B cell (primary cell): ENCODE measurements at regions of chr19 and their contacts with region 1.

Region 1: GRCh38 chr19:48842789-48843162 is 6.5 kb upstream of the HSD17B14 start:
- DNase-seq: peak; percentile 79
- ATAC-seq: peak; percentile 71
- H3K4me3 ChIP-seq: no peak overlapping the region
- H3K4me3 Mint-ChIP-seq: no peak overlapping the region
- H3K27ac ChIP-seq: no peak overlapping the region
- H3K27ac Mint-ChIP-seq: no peak overlapping the region
- H3K4me1 ChIP-seq: no peaks in the 10 kb centered on the region
- H3K4me1 Mint-ChIP-seq: peaks cover 3% of the 10 kb centered on the region
- H3K27me3 ChIP-seq: no peaks in the 10 kb centered on the region
- H3K27me3 Mint-ChIP-seq: no peaks in the 10 kb centered on the region
- CTCF ChIP-seq: peak; percentile 82

Region 2: DNA sequence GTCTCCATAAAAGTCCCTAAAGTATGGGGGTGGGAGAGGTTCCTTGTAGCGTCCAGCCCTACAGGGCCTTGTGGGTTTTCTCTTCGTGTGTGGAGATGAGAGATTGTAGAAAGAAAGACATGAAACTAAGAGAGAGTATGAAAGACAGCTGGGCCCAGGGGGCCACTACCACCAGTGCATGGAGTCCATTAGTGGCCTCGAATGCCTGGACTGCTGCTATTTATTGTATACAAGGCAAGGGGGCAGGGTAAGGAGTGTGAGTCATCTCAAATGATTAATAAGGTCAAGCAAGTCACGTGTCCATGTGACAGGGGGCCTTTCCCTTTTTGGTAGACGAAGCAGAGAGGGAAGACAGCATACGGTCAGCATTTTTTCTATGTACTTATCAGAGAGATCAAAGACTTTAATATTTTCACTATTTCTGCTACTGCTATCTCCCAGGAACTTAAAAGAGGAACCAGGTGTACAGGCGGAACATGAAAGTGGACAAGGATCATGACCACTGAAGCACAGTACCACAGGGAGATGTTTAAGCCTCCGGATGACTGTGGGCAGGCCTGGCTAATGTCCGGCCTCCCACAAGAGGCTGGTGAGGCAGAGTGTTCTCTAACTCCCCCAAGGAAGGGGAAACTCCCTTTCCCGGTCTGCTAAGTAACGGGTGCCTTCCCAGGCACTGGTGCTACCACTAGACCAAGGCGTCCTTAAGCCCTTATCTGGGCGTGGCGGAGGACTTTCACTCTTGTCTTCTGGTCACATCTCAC is 62.0 kb before region 1 on chr19:
- CTCF ChIA-PET with region 1: interaction called, 43 read pairs
- POLR2A ChIA-PET with region 1: no interaction called
- intact Hi-C with region 1: no loop called
- DNase-seq: no peak
- ATAC-seq: no peak
- H3K4me3 ChIP-seq: no peak overlapping the region
- H3K4me3 Mint-ChIP-seq: no peak overlapping the region
- H3K27ac ChIP-seq: no peak overlapping the region
- H3K27ac Mint-ChIP-seq: peak overlapping the region; percentile 5
- H3K4me1 ChIP-seq: peaks cover 3 to 15% of the 10 kb centered on the region in 2 donors
- H3K4me1 Mint-ChIP-seq: peaks cover 19% of the 10 kb centered on the region
- H3K27me3 ChIP-seq: no peaks in the 10 kb centered on the region
- H3K27me3 Mint-ChIP-seq: no peaks in the 10 kb centered on the region
- CTCF ChIP-seq: no peak

Region 3: DNA sequence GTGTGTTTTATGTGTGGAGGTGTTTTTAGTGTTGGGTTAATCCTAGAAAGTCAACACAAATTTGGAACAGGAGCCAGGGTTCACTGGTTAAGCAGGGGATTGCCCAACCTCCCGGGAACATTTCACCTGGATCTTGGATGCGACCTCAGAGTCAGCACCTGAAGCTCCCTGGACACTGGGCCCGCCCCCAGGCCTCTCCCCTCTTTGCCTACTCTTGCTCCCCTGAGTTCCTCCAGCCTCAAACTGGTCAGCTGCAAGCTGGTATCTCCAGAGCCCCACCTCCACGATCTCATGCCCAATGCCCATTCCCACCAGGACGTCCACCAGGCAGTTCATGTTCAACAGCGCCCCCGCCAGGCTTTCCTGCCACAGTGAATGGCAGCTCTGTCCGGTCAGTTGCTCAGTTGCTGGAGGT is 16.2 kb before region 1 on chr19:
- CTCF ChIA-PET with region 1: interaction called, 26 read pairs
- POLR2A ChIA-PET with region 1: interaction called, 3 read pairs
- intact Hi-C with region 1: no loop called
- DNase-seq: no peak
- ATAC-seq: no peak
- H3K4me3 ChIP-seq: no peak overlapping the region
- H3K4me3 Mint-ChIP-seq: no peak overlapping the region
- H3K27ac ChIP-seq: no peak overlapping the region
- H3K27ac Mint-ChIP-seq: no peak overlapping the region
- H3K4me1 ChIP-seq: no peaks in the 10 kb centered on the region
- H3K4me1 Mint-ChIP-seq: no peaks in the 10 kb centered on the region
- H3K27me3 ChIP-seq: no peaks in the 10 kb centered on the region
- H3K27me3 Mint-ChIP-seq: no peaks in the 10 kb centered on the region
- CTCF ChIP-seq: no peak

Region 4: DNA sequence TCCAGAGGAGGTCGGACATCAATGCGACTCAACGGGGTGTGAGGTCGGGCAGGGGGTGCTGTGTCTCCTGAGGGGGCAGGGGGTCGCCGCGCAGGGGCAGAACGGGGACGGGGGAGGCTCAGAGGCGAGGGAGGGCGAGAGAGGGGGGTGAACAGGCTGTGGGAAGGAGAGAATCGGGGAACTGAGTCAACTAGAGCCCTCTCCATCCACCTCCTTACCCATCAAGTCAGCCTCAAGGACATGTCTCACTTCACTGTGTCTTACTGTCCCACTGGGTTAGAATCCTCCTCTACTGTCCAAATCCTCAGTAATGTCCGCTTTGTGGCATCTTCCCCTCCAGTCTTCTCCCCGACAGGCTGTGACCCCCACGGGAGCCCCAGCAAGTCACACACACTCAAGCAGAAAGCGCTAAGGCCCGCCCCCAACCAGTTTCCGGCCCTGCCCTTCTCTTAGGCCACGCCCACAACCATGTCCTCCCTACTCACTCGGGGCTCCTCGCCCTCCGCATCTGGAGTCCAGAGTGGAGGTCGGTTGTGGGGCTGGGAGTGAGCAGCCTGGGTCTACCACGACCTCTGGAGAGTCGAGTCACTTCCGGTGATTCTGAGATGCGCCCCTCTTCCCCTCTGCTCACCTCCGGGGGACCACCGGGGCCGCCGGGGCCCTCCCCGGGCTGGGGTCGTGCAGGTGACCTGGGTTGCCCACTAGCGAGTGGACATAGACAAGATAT is 16.4 kb after region 1 on chr19:
- CTCF ChIA-PET with region 1: interaction called, 65 read pairs
- POLR2A ChIA-PET with region 1: interaction called, 3 read pairs
- intact Hi-C with region 1: no loop called
- DNase-seq: peak; percentile 77
- ATAC-seq: peak; percentile 80
- H3K4me3 ChIP-seq: peak overlapping the region; percentile 19 to 63 (median 54)
- H3K4me3 Mint-ChIP-seq: peak overlapping the region; percentile 98
- H3K27ac ChIP-seq: peak overlapping the region; percentile 46 to 59
- H3K27ac Mint-ChIP-seq: peak overlapping the region; percentile 90
- H3K4me1 ChIP-seq: peaks cover 5 to 14% of the 10 kb centered on the region in 2 donors
- H3K4me1 Mint-ChIP-seq: peaks cover 10% of the 10 kb centered on the region
- H3K27me3 ChIP-seq: no peaks in the 10 kb centered on the region
- H3K27me3 Mint-ChIP-seq: no peaks in the 10 kb centered on the region
- CTCF ChIP-seq: no peak

Region 5: GRCh38 chr19:48899781-48900476 is 57.2 kb after region 1 on chr19 and contains the start of gene NUCB1:
- CTCF ChIA-PET with region 1: interaction called, 12 read pairs
- POLR2A ChIA-PET with region 1: no interaction called
- intact Hi-C with region 1: no loop called
- DNase-seq: peak; percentile 96
- ATAC-seq: peak; percentile 99
- H3K4me3 ChIP-seq: peak within 1 kb of the TSS; percentile 62 to 95 (median 82)
- H3K4me3 Mint-ChIP-seq: peak within 1 kb of the TSS; percentile 96
- H3K27ac ChIP-seq: peak within 1 kb of the TSS; percentile 61 to 83
- H3K27ac Mint-ChIP-seq: peak within 1 kb of the TSS; percentile 91
- H3K4me1 ChIP-seq: peaks cover 18 to 35% of the 10 kb centered on the region in 2 donors
- H3K4me1 Mint-ChIP-seq: peaks cover 31% of the 10 kb centered on the region
- H3K27me3 ChIP-seq: peaks cover 0 to 25% (median 6%) of the 10 kb centered on the region in 4 experiments
- H3K27me3 Mint-ChIP-seq: peaks cover 11% of the 10 kb centered on the region
- CTCF ChIP-seq: no peak
- total RNA-seq, gene NUCB1: 134 and 136 TPM in 2 replicates

Region 6: GRCh38 chr19:48954595-48955310 is 112.0 kb after region 1 on chr19 and contains the start of gene BAX:
- CTCF ChIA-PET with region 1: interaction called, 10 read pairs
- POLR2A ChIA-PET with region 1: interaction called, 12 read pairs
- intact Hi-C with region 1: no loop called
- DNase-seq: peak; percentile 92
- ATAC-seq: peak; percentile 88
- H3K4me3 ChIP-seq: peak within 1 kb of the TSS; percentile 47 to 99 (median 87)
- H3K4me3 Mint-ChIP-seq: peak within 1 kb of the TSS; percentile 85
- H3K27ac ChIP-seq: peak within 1 kb of the TSS; percentile 84 to 89
- H3K27ac Mint-ChIP-seq: peak within 1 kb of the TSS; percentile 92
- H3K4me1 ChIP-seq: peaks cover 6 to 16% of the 10 kb centered on the region in 2 donors
- H3K4me1 Mint-ChIP-seq: peaks cover 20% of the 10 kb centered on the region
- H3K27me3 ChIP-seq: no peaks in the 10 kb centered on the region
- H3K27me3 Mint-ChIP-seq: no peaks in the 10 kb centered on the region
- CTCF ChIP-seq: no peak
- total RNA-seq, gene BAX: 92.7 and 95.3 TPM in 2 replicates